A549 (cell line): ENCODE measurements at regions of chr14 and their contacts with region 1.

Region 1: GRCh38 chr14:68911594-68912227 is 67.4 kb downstream of the ACTN1 start:
- DNase-seq: peak; percentile 78 to 92
- ATAC-seq: peak; percentile 89 to 95
- H3K4me3 ChIP-seq: no peak overlapping the region
- H3K27ac ChIP-seq: peak overlapping the region; percentile 42 to 55; a peak in 4 of 6 replicates
- H3K4me1 ChIP-seq: peaks cover 31% of the 10 kb centered on the region
- CTCF ChIP-seq: peak; percentile 99
- EP300 ChIP-seq: no peak
- POLR2A ChIP-seq: no peak
- RAD21 ChIP-seq: peak; percentile 97 to 98

Region 2: GRCh38 chr14:68896132-68896531 is 15.6 kb before region 1 on chr14:
- CTCF ChIA-PET with region 1: interaction called, 110 read pairs
- POLR2A ChIA-PET with region 1: no interaction called
- DNase-seq: no peak
- ATAC-seq: peak in 1 of 2 experiments; percentile 40; a peak in 2 of 6 replicates
- H3K4me3 ChIP-seq: no peak overlapping the region
- H3K27ac ChIP-seq: no peak overlapping the region
- H3K4me1 ChIP-seq: 0 out of 3 replicates have a peak, but pooled peaks cover 4% of the 10 kb centered on the region
- CTCF ChIP-seq: peak; percentile 19; the same call in 1 of the 3 replicates
- EP300 ChIP-seq: no peak
- POLR2A ChIP-seq: no peak
- RAD21 ChIP-seq: no peak

Region 3: GRCh38 chr14:68926236-68926635 is 14.5 kb after region 1 on chr14:
- CTCF ChIA-PET with region 1: interaction called, 131 read pairs
- POLR2A ChIA-PET with region 1: no interaction called
- DNase-seq: peak in 1 of 2 experiments; percentile 46
- ATAC-seq: no peak
- H3K4me3 ChIP-seq: no peak overlapping the region
- H3K27ac ChIP-seq: no peak overlapping the region
- H3K4me1 ChIP-seq: peaks cover 26% of the 10 kb centered on the region
- CTCF ChIP-seq: peak; percentile 23; the same call in 2 of the 3 replicates
- EP300 ChIP-seq: no peak
- POLR2A ChIP-seq: no peak
- RAD21 ChIP-seq: no peak

Region 4: GRCh38 chr14:69055999-69056788 is 144.5 kb after region 1 on chr14:
- CTCF ChIA-PET with region 1: interaction called, 10 read pairs
- POLR2A ChIA-PET with region 1: no interaction called
- DNase-seq: no peak
- ATAC-seq: no peak
- H3K4me3 ChIP-seq: no peak overlapping the region
- H3K27ac ChIP-seq: no peak overlapping the region
- H3K4me1 ChIP-seq: peaks cover 19% of the 10 kb centered on the region
- CTCF ChIP-seq: no peak
- EP300 ChIP-seq: no peak
- POLR2A ChIP-seq: no peak
- RAD21 ChIP-seq: no peak

Region 5: GRCh38 chr14:69101331-69101826 is 189.7 kb after region 1 on chr14:
- CTCF ChIA-PET with region 1: interaction called, 83 read pairs
- POLR2A ChIA-PET with region 1: no interaction called
- DNase-seq: peak; percentile 45 to 76
- ATAC-seq: peak; percentile 97 to 98
- H3K4me3 ChIP-seq: no peak overlapping the region
- H3K27ac ChIP-seq: peak overlapping the region; percentile 65
- H3K4me1 ChIP-seq: peaks cover 18% of the 10 kb centered on the region
- CTCF ChIP-seq: peak; percentile 81
- EP300 ChIP-seq: no peak
- POLR2A ChIP-seq: no peak
- RAD21 ChIP-seq: peak; percentile 65 to 70; a peak in 4 of 5 replicates